ENCODE measurements at regions of chr7 and their contacts with region 1.

Region 1: GRCh38 chr7:107982918-107983389 is 20.0 kb downstream of the LAMB1 start:
- DNase-seq: no peak
- H3K4me3 ChIP-seq: no peak overlapping the region
- H3K27ac ChIP-seq: no peak overlapping the region
- H3K4me1 ChIP-seq: no peaks in the 10 kb centered on the region
- H3K27me3 ChIP-seq: no peaks in the 10 kb centered on the region
- CTCF ChIP-seq: no peak

Region 2: DNA sequence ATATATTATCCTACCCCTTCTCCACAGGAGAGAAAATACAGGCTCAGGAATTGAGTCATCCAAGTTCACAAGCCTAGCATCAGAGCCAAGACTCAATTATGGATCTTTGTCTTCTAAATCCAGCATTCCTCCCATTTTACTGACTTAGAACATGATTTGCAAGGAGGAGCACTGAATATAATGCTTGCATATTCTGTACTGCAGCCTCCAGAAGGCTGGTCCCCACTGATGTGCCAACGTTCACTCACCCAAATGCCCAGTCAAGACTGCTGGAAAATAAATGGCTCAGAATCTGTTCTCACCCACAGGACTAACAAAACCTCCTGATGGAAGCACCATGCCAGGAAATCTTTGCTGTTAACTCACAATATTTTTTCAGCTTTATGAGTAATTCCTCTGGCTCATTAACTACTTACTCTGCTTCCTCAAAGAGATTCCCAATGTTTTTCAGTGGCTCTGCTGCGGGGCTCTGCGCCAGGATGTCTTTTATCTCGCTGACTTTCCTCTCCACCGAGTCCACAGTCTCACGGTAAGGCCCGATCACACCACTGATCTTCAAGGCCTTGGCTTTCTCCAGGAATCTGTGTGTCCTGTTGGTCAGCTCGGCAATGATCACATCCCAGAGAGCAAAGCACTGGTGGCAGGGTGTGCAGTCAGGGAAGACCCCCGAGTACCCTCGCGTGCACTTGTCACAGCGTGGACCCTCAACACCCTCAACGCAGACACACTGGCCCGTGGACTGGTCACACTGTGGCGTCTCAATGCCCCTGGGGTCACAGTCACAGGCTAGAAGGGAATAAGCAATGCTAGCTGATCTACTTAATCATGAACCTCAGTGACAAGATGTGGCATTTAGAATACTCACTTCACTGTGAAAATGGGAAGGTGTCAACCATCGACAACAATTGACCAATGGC is 43.1 kb before region 1 on chr7:
- intact Hi-C with region 1: loop called (anchors 10 kb)
- DNase-seq: no peak
- H3K4me3 ChIP-seq: no peak overlapping the region
- H3K27ac ChIP-seq: peak overlapping the region; percentile 55
- H3K4me1 ChIP-seq: no peaks in the 10 kb centered on the region
- H3K27me3 ChIP-seq: no peaks in the 10 kb centered on the region
- CTCF ChIP-seq: no peak

Region 3: GRCh38 chr7:108413782-108414492 is 431.0 kb after region 1 on chr7:
- intact Hi-C with region 1: no loop called
- DNase-seq: no peak
- H3K4me3 ChIP-seq: no peak overlapping the region
- H3K27ac ChIP-seq: no peak overlapping the region
- H3K4me1 ChIP-seq: no peaks in the 10 kb centered on the region
- H3K27me3 ChIP-seq: no peaks in the 10 kb centered on the region
- CTCF ChIP-seq: no peak